Heart left ventricle (tissue), 16 donors: ENCODE measurements at regions of chr3 and their contacts with region 1.

Region 1: GRCh38 chr3:145721273-145721805 is 439.6 kb downstream of the PLOD2 start:
- DNase-seq: no peak
- ATAC-seq: no peak
- H3K4me3 ChIP-seq: no peak overlapping the region
- H3K27ac ChIP-seq: no peak overlapping the region
- H3K4me1 ChIP-seq: no peaks in the 10 kb centered on the region
- H3K27me3 ChIP-seq: no peaks in the 10 kb centered on the region
- CTCF ChIP-seq: no peak
- POLR2A ChIP-seq: no peak

Region 2: GRCh38 chr3:145370544-145371252 is 350.6 kb before region 1 on chr3:
- intact Hi-C with region 1: loop called in 1 of 10 experiments (anchors 5 kb)
- DNase-seq: no peak
- ATAC-seq: no peak
- H3K4me3 ChIP-seq: no peak overlapping the region
- H3K27ac ChIP-seq: no peak overlapping the region
- H3K4me1 ChIP-seq: no peaks in the 10 kb centered on the region
- H3K27me3 ChIP-seq: no peaks in the 10 kb centered on the region
- CTCF ChIP-seq: no peak
- POLR2A ChIP-seq: no peak